ENCODE measurements at regions of chr12 and their contacts with region 1.

Region 1: DNA sequence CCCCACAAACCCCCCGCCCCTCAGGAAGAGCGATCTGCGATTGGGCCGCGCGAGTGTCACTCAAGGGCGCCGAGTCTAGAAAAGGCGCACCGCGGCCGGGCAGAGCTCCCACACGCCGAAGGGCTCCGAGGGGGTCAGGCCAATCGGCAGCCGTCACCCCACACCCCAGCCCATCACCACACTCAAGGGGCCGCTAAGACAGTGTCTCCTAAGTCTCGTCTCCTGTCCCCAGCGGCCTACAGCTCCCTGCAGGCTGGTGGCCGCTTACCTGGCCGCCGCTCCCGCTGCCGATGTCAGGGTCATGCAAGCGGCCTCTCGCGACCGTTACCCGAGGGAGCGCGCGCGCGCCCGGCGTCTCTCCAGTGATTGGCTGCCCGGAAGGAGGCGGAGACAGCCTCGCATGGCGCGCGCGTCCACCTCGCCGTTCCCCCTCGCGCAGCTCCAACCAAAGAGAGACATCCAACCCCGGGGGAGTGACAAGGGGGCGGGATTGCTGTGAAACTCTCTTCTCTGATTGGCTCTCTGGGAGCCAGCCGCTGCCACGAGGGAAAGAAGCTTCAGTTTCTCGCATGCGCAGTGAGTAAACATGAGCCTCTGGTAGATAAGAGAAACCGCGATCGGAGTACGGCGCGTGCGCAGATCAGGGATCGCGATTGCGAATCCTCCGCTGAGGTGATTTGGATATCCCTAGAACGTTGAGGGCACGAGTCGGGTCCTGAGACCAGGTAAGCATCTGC is at the starts of genes MPHOSPH9 and MTRFR:
- DNase-seq: peak; percentile 100
- ATAC-seq: peak; percentile 90
- H3K4me3 ChIP-seq: peak within 1 kb of the TSS; percentile 88 to 99 (median 96)
- H3K4me3 Mint-ChIP-seq: peak within 1 kb of the TSS; percentile 92
- H3K27ac ChIP-seq: peak within 1 kb of the TSS; percentile 84 to 93
- H3K27ac Mint-ChIP-seq: peak within 1 kb of the TSS; percentile 95
- H3K4me1 ChIP-seq: peaks cover 53 to 61% of the 10 kb centered on the region in 2 donors
- H3K4me1 Mint-ChIP-seq: peaks cover 67% of the 10 kb centered on the region
- H3K27me3 ChIP-seq: no peaks in the 10 kb centered on the region
- H3K27me3 Mint-ChIP-seq: no peaks in the 10 kb centered on the region
- CTCF ChIP-seq: no peak
- total RNA-seq, gene MPHOSPH9: 40.4 and 45.1 TPM in 2 replicates
- total RNA-seq, gene MTRFR: 45.5 and 49.0 TPM in 2 replicates

Region 2: DNA sequence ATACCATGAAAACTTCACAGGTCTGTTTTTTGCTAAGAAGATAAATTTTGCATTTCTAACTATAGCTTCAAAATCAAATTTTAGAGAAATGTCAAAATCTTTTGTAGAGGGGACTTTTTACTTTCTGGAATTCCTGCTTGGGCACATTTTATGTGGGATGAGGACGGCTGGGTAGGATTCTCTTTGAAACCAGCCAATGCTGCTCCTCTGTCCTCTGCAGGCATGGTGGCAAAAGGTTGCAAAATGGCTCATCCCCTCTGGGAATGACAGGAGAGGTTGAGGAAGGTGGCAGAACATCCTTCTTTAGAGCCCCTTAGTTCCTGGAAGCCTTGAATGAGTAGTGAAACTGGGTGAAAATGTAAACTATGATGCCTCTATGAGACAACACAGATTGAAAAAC is 465.3 kb before region 1 on chr12:
- CTCF ChIA-PET with region 1: no interaction called
- POLR2A ChIA-PET with region 1: no interaction called
- intact Hi-C with region 1: loop called (anchors 5 kb)
- DNase-seq: no peak
- ATAC-seq: no peak
- H3K4me3 ChIP-seq: no peak overlapping the region
- H3K4me3 Mint-ChIP-seq: no peak overlapping the region
- H3K27ac ChIP-seq: peak overlapping the region in 1 of 2 donors; percentile 40
- H3K27ac Mint-ChIP-seq: no peak overlapping the region
- H3K4me1 ChIP-seq: no peaks in the 10 kb centered on the region
- H3K4me1 Mint-ChIP-seq: no peaks in the 10 kb centered on the region
- H3K27me3 ChIP-seq: no peaks in the 10 kb centered on the region
- H3K27me3 Mint-ChIP-seq: no peaks in the 10 kb centered on the region
- CTCF ChIP-seq: no peak

Region 3: DNA sequence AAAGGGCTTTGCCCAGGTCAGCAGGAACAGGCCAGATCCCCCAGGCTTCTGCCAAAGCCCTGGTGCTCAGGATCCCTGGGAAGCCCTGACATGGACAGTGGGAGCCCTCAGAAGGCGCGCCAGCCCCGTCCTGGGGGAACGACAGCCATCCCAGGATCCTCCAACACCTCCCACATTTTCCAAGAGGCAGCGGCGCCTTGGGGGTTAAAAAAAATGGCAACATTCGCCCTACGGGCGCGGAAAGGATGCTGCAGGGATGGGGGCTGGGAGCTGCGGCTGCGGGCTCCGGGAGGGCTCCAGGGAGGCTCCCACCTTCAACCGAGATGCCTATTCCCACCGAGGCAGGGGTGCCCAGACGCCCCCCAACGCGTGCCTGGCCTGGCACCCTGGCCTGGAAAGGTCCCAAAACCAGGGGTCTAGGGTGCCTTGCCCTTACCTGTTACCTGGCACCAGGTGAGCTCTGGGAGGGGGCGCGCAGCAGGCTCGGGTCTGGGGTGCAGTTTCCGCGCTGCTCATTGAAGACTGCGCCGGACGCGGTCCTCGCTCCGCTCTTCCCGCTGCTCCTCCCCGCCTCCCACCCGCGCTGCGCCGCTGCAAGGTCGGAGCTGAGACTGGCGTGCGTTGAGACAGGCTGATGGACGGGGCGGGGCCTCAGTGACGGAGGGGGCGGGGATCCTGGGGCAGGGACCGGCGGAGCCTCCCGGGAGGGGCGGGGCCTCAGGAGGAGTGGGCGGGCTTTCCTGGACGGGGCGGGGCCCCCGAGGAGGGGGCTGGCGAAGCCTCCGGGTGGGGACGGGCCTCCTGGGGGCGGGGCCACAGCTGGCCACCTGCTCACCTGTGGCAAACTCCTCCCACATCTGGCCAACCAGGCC is 266.9 kb before region 1 on chr12 and contains the start of gene ABCB9:
- CTCF ChIA-PET with region 1: interaction called, 10 read pairs
- POLR2A ChIA-PET with region 1: interaction called, 7 read pairs
- intact Hi-C with region 1: no loop called
- DNase-seq: peak; percentile 92
- ATAC-seq: peak; percentile 98
- H3K4me3 ChIP-seq: peak within 1 kb of the TSS in 4 of 5 experiments; percentile 40 to 68 (median 58)
- H3K4me3 Mint-ChIP-seq: peak within 1 kb of the TSS; percentile 83
- H3K27ac ChIP-seq: no peak within 1 kb of the TSS
- H3K27ac Mint-ChIP-seq: peak within 1 kb of the TSS; percentile 46
- H3K4me1 ChIP-seq: peaks cover 8 to 14% of the 10 kb centered on the region in 2 donors
- H3K4me1 Mint-ChIP-seq: peaks cover 6% of the 10 kb centered on the region
- H3K27me3 ChIP-seq: no peaks in the 10 kb centered on the region
- H3K27me3 Mint-ChIP-seq: no peaks in the 10 kb centered on the region
- CTCF ChIP-seq: no peak
- total RNA-seq, gene ABCB9: 2.5 and 3.7 TPM in 2 replicates

Region 4: DNA sequence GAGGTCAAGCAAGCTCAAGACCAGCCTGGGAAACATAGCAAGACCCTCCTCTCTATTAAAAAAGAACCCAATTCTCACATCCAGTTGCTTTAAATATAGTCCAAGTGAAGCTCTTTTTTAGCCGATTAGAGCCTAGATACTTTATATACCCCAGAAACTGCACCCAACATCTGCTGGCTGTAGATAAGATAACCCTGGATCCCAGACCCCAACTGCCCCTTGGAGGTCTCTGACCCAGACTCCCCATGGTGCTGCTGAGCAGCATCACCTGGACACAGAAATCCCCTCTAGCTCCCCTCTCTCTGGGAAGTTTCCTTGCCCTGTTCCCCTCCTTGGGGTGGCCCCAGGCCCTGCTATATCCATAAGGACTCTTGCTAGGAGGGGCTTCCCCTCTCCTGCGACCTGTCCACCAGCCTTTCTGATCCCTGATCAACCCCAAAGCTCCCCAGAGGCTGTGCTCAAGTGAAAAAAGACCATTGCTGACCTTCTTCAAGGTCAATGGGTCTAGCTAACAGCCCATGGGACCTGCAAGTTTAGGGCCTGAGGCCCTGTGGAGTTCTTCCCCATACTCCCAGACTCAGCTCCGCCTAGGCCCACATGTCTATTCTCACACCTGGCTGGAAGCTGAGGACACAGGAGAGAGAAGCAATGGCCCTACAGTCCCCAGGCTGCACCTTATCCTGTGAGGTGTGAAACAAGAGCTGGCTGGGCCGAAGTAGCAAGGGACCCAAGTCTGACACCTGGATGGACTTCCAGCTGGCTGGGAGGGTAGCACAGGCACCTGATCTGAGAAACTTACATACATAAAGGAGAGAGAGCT is 196.3 kb before region 1 on chr12:
- CTCF ChIA-PET with region 1: interaction called, 212 read pairs
- POLR2A ChIA-PET with region 1: no interaction called
- intact Hi-C with region 1: no loop called
- DNase-seq: no peak
- ATAC-seq: no peak
- H3K4me3 ChIP-seq: no peak overlapping the region
- H3K4me3 Mint-ChIP-seq: no peak overlapping the region
- H3K27ac ChIP-seq: no peak overlapping the region
- H3K27ac Mint-ChIP-seq: no peak overlapping the region
- H3K4me1 ChIP-seq: peaks cover 9 to 14% of the 10 kb centered on the region in 2 donors
- H3K4me1 Mint-ChIP-seq: peaks cover 13% of the 10 kb centered on the region
- H3K27me3 ChIP-seq: no peaks in the 10 kb centered on the region
- H3K27me3 Mint-ChIP-seq: no peaks in the 10 kb centered on the region
- CTCF ChIP-seq: no peak

Region 5: GRCh38 chr12:123099560-123100192 is 133.3 kb before region 1 on chr12:
- CTCF ChIA-PET with region 1: no interaction called
- POLR2A ChIA-PET with region 1: no interaction called
- intact Hi-C with region 1: no loop called
- DNase-seq: no peak
- ATAC-seq: no peak
- H3K4me3 ChIP-seq: no peak overlapping the region
- H3K4me3 Mint-ChIP-seq: no peak overlapping the region
- H3K27ac ChIP-seq: no peak overlapping the region
- H3K27ac Mint-ChIP-seq: no peak overlapping the region
- H3K4me1 ChIP-seq: peaks cover 6 to 22% of the 10 kb centered on the region in 2 donors
- H3K4me1 Mint-ChIP-seq: peaks cover 29% of the 10 kb centered on the region
- H3K27me3 ChIP-seq: no peaks in the 10 kb centered on the region
- H3K27me3 Mint-ChIP-seq: no peaks in the 10 kb centered on the region
- CTCF ChIP-seq: no peak

Region 6: GRCh38 chr12:123250484-123251383 is 17.8 kb after region 1 on chr12:
- CTCF ChIA-PET with region 1: interaction called, 17 read pairs
- POLR2A ChIA-PET with region 1: interaction called, 3 read pairs
- intact Hi-C with region 1: no loop called
- DNase-seq: no peak
- ATAC-seq: no peak
- H3K4me3 ChIP-seq: no peak overlapping the region
- H3K4me3 Mint-ChIP-seq: no peak overlapping the region
- H3K27ac ChIP-seq: no peak overlapping the region
- H3K27ac Mint-ChIP-seq: no peak overlapping the region
- H3K4me1 ChIP-seq: peaks cover 0 to 3% of the 10 kb centered on the region in 2 donors
- H3K4me1 Mint-ChIP-seq: peaks cover 35% of the 10 kb centered on the region
- H3K27me3 ChIP-seq: no peaks in the 10 kb centered on the region
- H3K27me3 Mint-ChIP-seq: no peaks in the 10 kb centered on the region
- CTCF ChIP-seq: no peak

Region 7: DNA sequence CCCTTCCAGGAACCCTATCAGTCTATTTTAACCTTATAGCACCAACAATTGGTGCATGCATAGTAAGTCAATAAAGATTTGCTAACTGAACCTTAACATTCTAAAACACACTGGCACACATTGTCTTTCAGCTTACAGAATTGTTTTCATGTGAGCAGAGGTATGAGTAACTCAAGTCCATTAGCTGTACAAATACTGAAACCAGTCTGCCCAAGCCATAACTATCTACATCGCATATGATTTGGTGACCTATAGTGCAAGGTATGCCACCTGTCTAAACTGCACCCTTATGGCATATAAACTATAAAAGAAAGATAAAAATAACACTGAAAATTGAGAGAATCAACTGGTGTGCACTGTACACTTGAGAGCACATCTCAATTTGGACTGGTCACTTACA is 96.8 kb after region 1 on chr12:
- CTCF ChIA-PET with region 1: no interaction called
- POLR2A ChIA-PET with region 1: no interaction called
- intact Hi-C with region 1: no loop called
- DNase-seq: no peak
- ATAC-seq: no peak
- H3K4me3 ChIP-seq: no peak overlapping the region
- H3K4me3 Mint-ChIP-seq: no peak overlapping the region
- H3K27ac ChIP-seq: no peak overlapping the region
- H3K27ac Mint-ChIP-seq: no peak overlapping the region
- H3K4me1 ChIP-seq: no peaks in the 10 kb centered on the region
- H3K4me1 Mint-ChIP-seq: no peaks in the 10 kb centered on the region
- H3K27me3 ChIP-seq: no peaks in the 10 kb centered on the region
- H3K27me3 Mint-ChIP-seq: no peaks in the 10 kb centered on the region
- CTCF ChIP-seq: no peak

Region 8: DNA sequence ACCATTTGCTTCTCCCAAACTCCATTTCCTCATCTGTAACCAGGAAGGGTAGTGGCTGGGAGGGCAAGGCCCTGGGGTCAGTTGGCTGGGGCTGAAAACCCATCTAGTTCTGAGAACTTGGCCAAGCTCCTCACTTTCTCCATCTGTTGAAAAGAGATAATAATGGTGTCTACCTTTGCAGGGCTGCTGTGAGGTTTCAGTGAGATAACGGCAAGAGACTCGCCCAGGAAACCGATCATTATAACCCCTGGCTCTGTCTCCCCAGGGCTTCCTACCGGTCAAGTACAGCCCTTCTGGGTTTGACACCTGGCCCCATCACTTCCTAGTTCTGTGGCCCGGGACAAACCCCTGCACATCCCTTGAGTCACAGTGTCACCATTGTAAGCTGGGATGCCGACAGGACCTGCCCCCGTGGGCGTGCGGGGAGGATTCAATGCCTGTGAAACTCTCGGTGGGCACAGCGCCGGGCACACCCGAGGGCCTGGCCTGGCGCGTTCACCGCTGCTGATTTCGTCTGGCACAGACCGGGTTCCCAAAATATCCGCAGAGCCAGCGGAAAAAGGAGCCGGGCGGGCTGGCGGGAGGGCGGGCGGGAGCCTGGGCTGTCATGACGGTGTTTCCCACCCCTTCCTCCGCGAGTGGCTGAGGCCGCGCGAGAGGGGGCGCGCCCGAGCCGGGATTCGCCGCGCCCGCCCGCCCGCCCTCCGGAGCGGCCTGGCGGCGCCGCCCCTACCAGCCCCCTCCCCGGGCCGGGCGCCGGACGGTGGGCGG is 155.4 kb after region 1 on chr12:
- CTCF ChIA-PET with region 1: no interaction called
- POLR2A ChIA-PET with region 1: interaction called, 3 read pairs
- intact Hi-C with region 1: loop called (anchors 5 kb)
- DNase-seq: peak; percentile 85
- ATAC-seq: peak; percentile 62
- H3K4me3 ChIP-seq: peak overlapping the region; percentile 60 to 78 (median 63)
- H3K4me3 Mint-ChIP-seq: peak overlapping the region; percentile 91
- H3K27ac ChIP-seq: peak overlapping the region; percentile 74 to 80
- H3K27ac Mint-ChIP-seq: peak overlapping the region; percentile 93
- H3K4me1 ChIP-seq: peaks cover 22 to 36% of the 10 kb centered on the region in 2 donors
- H3K4me1 Mint-ChIP-seq: peaks cover 38% of the 10 kb centered on the region
- H3K27me3 ChIP-seq: no peaks in the 10 kb centered on the region
- H3K27me3 Mint-ChIP-seq: no peaks in the 10 kb centered on the region
- CTCF ChIP-seq: peak; percentile 9

Region 9: GRCh38 chr12:123540899-123541662 is 308.1 kb after region 1 on chr12:
- CTCF ChIA-PET with region 1: no interaction called
- POLR2A ChIA-PET with region 1: no interaction called
- intact Hi-C with region 1: no loop called
- DNase-seq: no peak
- ATAC-seq: no peak
- H3K4me3 ChIP-seq: no peak overlapping the region
- H3K4me3 Mint-ChIP-seq: no peak overlapping the region
- H3K27ac ChIP-seq: no peak overlapping the region
- H3K27ac Mint-ChIP-seq: no peak overlapping the region
- H3K4me1 ChIP-seq: no peaks in the 10 kb centered on the region
- H3K4me1 Mint-ChIP-seq: no peaks in the 10 kb centered on the region
- H3K27me3 ChIP-seq: no peaks in the 10 kb centered on the region
- H3K27me3 Mint-ChIP-seq: no peaks in the 10 kb centered on the region
- CTCF ChIP-seq: no peak